Thyroid gland (tissue), 4 donors: ENCODE measurements at regions of chr10 and their contacts with region 1.

Region 1: GRCh38 chr10:67697724-67698131 is 1.7 kb upstream of the CTNNA3 start:
- DNase-seq: peak; percentile 12 to 31
- H3K4me3 ChIP-seq: no peak overlapping the region
- H3K27ac ChIP-seq: no peak overlapping the region
- H3K4me1 ChIP-seq: peaks cover 0 to 4% of the 10 kb centered on the region in 2 donors
- H3K27me3 ChIP-seq: no peaks in the 10 kb centered on the region
- CTCF ChIP-seq: peak in 5 of 6 experiments; percentile 21 to 70 (median 63)
- POLR2A ChIP-seq: no peak

Region 2: DNA sequence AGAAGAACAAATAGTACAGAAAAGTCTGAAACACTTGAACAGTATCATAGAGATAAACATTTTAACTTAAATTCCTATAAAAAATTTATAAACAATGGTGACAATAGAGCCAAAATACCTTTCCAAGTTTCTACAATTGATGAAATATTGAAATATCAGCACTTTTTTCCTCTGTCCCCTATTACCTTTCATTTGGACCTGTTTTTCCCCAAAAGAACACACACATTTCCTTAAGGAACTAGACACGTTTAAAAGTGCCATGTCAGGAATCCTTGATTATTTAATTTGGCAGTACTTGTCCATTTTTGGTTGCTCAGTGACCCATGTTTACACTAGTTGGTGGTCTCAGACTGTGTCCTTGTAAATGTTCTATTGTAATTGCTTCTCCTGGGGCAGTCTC is 164.4 kb before region 1 on chr10:
- intact Hi-C with region 1: no loop called
- DNase-seq: no peak
- H3K4me3 ChIP-seq: no peak overlapping the region
- H3K27ac ChIP-seq: no peak overlapping the region
- H3K4me1 ChIP-seq: no peaks in the 10 kb centered on the region
- H3K27me3 ChIP-seq: no peaks in the 10 kb centered on the region
- CTCF ChIP-seq: no peak
- POLR2A ChIP-seq: no peak

Region 3: DNA sequence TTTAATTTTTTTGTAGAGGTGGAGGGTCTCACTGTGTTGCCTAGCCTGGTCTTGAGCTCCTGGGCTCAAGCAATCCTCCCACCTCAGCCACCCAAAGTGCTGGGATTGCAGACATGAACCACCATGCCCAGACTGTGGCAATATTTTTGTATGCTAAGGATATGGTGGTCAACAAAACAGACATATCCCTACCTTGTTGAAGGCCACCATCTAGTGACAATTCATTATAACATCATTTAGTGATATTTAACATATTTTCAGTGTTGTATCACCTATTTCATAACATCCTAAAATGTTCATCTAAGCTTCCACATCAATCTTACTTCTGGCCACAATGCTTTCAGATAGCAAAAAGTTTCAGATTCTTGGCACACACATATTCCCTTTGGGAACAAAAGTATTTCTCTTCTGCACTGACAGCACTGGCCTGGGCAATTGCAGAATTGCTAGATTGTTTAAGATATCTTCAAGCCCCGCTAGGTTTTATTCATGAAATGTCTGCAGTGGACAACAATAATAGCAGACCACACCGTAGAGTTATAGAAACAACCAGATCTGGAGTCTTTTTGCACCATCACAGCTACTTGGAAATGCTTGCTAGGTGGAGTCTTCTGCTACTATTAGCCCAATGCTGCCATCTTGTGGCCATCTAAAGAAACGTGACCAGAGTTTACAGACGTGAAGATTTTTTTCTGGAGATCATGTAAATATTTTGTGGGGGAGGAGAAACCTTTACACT is 81.9 kb after region 1 on chr10:
- intact Hi-C with region 1: loop called (anchors 5 kb)
- DNase-seq: peak; percentile 57 to 64
- H3K4me3 ChIP-seq: no peak overlapping the region
- H3K27ac ChIP-seq: no peak overlapping the region
- H3K4me1 ChIP-seq: no peaks in the 10 kb centered on the region
- H3K27me3 ChIP-seq: no peaks in the 10 kb centered on the region
- CTCF ChIP-seq: peak; percentile 51 to 82 (median 76)
- POLR2A ChIP-seq: no peak

Region 4: DNA sequence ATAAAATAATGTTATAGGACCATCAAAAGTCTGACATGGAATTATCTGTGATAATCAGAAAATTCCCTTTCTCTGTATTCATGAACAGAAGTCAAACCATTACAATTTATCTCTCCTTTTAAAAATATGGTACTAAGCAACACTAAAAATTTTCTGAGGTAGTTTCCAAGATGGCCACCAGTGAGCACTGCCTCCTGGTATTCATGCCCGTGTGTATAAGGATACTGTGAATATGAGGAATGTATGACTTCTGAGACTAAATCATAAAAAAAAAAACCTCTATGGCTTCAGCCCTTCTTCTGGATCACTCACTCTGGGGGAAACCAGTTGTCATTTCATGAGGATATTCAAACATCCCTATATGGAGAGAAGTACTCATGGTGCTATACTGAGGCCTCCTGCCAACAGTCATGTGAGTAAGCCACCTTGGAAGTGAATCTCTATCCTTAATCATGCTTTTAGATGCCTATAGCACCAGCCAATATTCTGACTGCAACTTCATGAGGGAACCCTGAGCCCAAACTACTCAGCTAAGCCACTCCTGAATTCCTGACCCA is 227.8 kb after region 1 on chr10:
- intact Hi-C with region 1: no loop called
- DNase-seq: no peak
- H3K4me3 ChIP-seq: no peak overlapping the region
- H3K27ac ChIP-seq: no peak overlapping the region
- H3K4me1 ChIP-seq: no peaks in the 10 kb centered on the region
- H3K27me3 ChIP-seq: no peaks in the 10 kb centered on the region
- CTCF ChIP-seq: no peak
- POLR2A ChIP-seq: no peak